Common myeloid progenitor, CD34-positive (primary cell): ENCODE measurements at regions of chr4 and their contacts with region 1.

Region 1: DNA sequence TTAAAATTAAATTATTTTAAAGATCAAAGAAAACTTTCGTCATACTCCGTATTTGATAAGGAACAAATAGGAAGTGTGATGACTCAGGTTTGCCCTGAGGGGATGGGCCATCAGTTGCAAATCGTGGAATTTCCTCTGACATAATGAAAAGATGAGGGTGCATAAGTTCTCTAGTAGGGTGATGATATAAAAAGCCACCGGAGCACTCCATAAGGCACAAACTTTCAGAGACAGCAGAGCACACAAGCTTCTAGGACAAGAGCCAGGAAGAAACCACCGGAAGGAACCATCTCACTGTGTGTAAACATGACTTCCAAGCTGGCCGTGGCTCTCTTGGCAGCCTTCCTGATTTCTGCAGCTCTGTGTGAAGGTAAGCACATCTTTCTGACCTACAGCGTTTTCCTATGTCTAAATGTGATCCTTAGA is at the start of gene CXCL8:
- DNase-seq: peak; percentile 83 to 84 (median 83)
- H3K4me3 ChIP-seq: peak within 1 kb of the TSS in 4 of 7 experiments; percentile 31 to 65 (median 56)
- H3K27ac ChIP-seq: peak within 1 kb of the TSS; percentile 59 to 62
- H3K4me1 ChIP-seq: peaks cover 14 to 31% (median 26%) of the 10 kb centered on the region in 4 experiments
- H3K27me3 ChIP-seq: no peaks in the 10 kb centered on the region

Region 2: DNA sequence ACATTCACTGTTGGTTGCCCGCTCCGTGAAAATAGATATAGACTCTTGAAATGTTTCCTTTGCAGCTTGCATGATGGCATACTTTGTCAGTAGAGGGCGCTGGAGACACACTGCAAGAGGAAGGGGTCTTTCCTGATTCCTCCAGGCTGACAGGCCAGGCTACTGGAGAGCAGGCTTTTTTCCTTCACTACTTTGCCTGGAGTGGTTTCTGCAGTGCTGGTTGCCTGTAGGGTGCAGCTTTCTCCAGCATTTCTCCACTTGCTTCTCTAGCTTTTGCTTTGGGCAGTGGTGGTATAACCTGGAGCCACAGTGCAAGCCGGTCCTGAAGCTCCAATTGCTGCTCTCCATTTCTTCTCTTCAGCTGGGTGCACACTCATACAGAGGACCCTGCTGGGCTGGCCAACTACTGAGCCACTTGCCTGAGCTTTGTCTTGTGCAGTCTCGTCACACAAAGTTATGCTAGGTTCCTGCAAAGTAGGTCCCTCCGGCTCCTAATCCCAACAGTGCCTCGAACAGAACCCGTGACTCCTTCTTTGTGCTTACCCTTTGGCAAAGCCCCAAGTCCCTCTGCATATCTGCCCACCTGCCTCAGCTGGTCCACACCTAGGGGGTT is 166.5 kb before region 1 on chr4:
- CTCF ChIA-PET with region 1: no interaction called
- POLR2A ChIA-PET with region 1: no interaction called
- DNase-seq: peak; percentile 77 to 84 (median 78)
- H3K4me3 ChIP-seq: no peak overlapping the region
- H3K27ac ChIP-seq: no peak overlapping the region
- H3K4me1 ChIP-seq: peaks cover 0 to 4% (median 0%) of the 10 kb centered on the region in 4 experiments
- H3K27me3 ChIP-seq: no peaks in the 10 kb centered on the region

Region 3: GRCh38 chr4:73998040-73999011 is 258.0 kb after region 1 on chr4 and contains the start of gene CXCL5:
- CTCF ChIA-PET with region 1: no interaction called
- POLR2A ChIA-PET with region 1: interaction called, 14 read pairs
- DNase-seq: peak; percentile 48 to 58 (median 49)
- H3K4me3 ChIP-seq: peak within 1 kb of the TSS in 5 of 7 experiments; percentile 37 to 74 (median 64)
- H3K27ac ChIP-seq: no peak within 1 kb of the TSS
- H3K4me1 ChIP-seq: peaks cover 0 to 10% (median 7%) of the 10 kb centered on the region in 4 experiments
- H3K27me3 ChIP-seq: peaks cover 0 to 14% (median 6%) of the 10 kb centered on the region in 5 experiments